MCF 10A (cell line): ENCODE measurements at regions of chr20 and their contacts with region 1.

Region 1: GRCh38 chr20:31723319-31724078 is 831 bp upstream of the BCL2L1 start:
- DNase-seq: peak; percentile 96
- H3K4me3 Mint-ChIP-seq: peak overlapping the region; percentile 91
- H3K27ac Mint-ChIP-seq: peak overlapping the region; percentile 93
- H3K4me1 Mint-ChIP-seq: peaks cover 40% of the 10 kb centered on the region
- H3K27me3 Mint-ChIP-seq: no peaks in the 10 kb centered on the region
- CTCF ChIP-seq: peak; percentile 82

Region 2: DNA sequence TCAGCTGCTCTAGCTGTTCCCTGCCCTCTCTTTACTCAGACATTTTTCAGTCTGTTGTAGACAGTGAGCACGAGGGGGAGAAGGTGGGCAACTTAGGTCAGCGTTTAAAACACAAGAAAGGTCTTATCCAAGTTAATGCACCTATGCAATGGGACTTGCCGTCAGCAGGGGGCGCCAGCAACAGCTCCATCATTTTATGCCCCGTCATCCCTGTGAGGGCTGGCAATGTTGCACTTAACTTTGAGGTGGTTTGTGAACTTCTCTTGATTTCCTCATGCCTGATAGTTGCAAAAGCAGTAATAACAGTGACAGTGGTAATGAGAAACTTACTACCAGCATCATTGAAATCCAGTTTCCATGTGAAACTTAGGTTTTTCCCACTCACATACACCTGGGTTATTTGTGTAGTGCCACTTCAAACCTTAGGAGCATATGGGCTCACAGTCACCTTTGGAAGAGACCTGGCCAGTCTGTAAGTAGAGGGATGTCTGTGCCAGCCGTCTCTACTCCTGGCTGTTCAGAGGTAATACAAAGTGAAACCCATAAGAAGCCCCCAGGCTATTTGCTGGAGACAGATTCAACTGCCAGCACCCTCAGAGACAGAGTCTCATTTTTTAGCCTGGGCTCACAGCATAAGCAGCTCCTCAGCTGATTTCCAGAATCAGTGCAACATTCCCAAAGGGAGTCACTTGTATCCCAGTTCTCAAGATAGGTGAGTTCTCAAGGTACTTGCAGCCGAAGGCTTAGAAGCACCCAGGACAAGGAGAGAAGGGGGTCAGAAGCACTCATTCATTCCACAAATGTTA is 163.2 kb before region 1 on chr20:
- CTCF ChIA-PET with region 1: interaction called, 35 read pairs
- POLR2A ChIA-PET with region 1: interaction called, 8 read pairs
- intact Hi-C with region 1: no loop called
- DNase-seq: peak; percentile 87
- H3K4me3 Mint-ChIP-seq: peak overlapping the region; percentile 45
- H3K27ac Mint-ChIP-seq: peak overlapping the region; percentile 85
- H3K4me1 Mint-ChIP-seq: peaks cover 30% of the 10 kb centered on the region
- H3K27me3 Mint-ChIP-seq: no peaks in the 10 kb centered on the region
- CTCF ChIP-seq: peak; percentile 94

Region 3: GRCh38 chr20:31605031-31605901 is 118.2 kb before region 1 on chr20 and contains the start of gene ID1:
- CTCF ChIA-PET with region 1: interaction called, 50 read pairs
- POLR2A ChIA-PET with region 1: interaction called, 94 read pairs
- intact Hi-C with region 1: no loop called
- DNase-seq: peak; percentile 98
- H3K4me3 Mint-ChIP-seq: peak within 1 kb of the TSS; percentile 88
- H3K27ac Mint-ChIP-seq: peak within 1 kb of the TSS; percentile 81
- H3K4me1 Mint-ChIP-seq: peaks cover 24% of the 10 kb centered on the region
- H3K27me3 Mint-ChIP-seq: no peaks in the 10 kb centered on the region
- CTCF ChIP-seq: no peak
- total RNA-seq, gene ID1: 35.7 and 38.4 TPM in 2 replicates

Region 4: GRCh38 chr20:31652917-31653396 is 70.5 kb before region 1 on chr20:
- CTCF ChIA-PET with region 1: interaction called, 626 read pairs
- POLR2A ChIA-PET with region 1: interaction called, 259 read pairs
- intact Hi-C with region 1: no loop called
- DNase-seq: peak; percentile 83
- H3K4me3 Mint-ChIP-seq: peak overlapping the region; percentile 2
- H3K27ac Mint-ChIP-seq: peak overlapping the region; percentile 57
- H3K4me1 Mint-ChIP-seq: peaks cover 12% of the 10 kb centered on the region
- H3K27me3 Mint-ChIP-seq: no peaks in the 10 kb centered on the region
- CTCF ChIP-seq: no peak

Region 5: DNA sequence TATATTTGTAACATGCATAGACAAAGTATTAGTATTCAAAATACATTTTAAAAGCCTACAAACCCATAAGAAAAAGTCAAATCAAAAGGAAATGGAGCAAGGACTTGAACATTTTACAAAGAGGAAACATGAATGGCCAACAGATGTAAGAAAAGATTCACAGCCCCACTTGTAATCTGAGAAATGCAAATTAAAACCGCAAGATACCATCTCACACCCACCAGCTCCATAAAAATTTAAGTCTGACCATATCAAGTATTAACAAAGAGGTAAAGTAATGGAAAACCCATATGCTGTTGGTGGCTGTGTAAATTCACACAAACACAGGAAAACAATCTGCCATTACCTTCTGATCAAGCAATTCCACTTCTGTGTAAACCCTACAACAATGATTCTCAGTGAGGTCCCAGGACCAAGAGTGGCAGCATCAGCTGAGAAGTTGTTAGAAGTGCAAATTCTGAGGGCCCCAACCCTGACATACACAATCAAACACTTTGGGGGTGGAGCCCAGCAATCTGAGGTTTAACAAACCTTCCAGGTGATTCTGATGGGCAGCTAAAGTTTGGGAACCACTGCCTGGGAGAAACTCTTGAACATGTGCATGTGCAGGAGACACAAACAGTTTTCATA is 31.7 kb before region 1 on chr20:
- CTCF ChIA-PET with region 1: interaction called, 429 read pairs
- POLR2A ChIA-PET with region 1: interaction called, 185 read pairs
- intact Hi-C with region 1: no loop called
- DNase-seq: no peak
- H3K4me3 Mint-ChIP-seq: no peak overlapping the region
- H3K27ac Mint-ChIP-seq: peak overlapping the region; percentile 31
- H3K4me1 Mint-ChIP-seq: peaks cover 34% of the 10 kb centered on the region
- H3K27me3 Mint-ChIP-seq: no peaks in the 10 kb centered on the region
- CTCF ChIP-seq: no peak

Region 6: DNA sequence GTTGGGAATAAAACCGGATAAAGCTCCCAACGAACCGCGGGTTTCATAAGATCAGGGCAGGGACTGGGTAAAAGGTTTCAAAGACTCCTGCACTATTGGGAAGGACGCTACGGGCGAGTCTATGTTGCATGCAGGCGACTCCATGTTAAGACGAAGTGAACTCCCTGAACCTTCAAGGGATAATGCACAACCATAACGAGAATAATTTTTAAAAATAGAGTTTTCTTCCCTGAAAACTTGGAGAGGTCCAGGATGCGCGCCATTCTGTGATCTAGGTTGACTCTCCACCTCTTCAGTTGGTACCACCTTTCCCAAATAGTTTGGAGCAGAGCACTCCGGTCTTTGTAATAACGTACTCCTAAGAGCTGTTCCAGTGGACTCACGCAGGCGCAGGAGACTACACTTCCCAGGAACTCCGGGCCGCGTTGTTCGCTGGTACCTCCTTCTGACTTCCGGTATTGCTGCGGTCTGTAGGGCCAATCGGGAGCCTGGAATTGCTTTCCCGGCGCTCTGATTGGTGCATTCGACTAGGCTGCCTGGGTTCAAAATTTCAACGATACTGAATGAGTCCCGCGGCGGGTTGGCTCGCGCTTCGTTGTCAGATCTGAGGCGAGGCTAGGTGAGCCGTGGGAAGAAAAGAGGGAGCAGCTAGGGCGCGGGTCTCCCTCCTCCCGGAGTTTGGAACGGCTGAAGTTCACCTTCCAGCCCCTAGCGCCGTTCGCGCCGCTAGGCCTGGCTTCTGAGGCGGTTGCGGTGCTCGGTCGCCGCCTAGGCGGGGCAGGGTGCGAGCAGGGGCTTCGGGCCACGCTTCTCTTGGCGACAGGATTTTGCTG is 15.4 kb after region 1 on chr20 and contains the start of gene TPX2:
- CTCF ChIA-PET with region 1: interaction called, 45 read pairs
- POLR2A ChIA-PET with region 1: interaction called, 68 read pairs
- intact Hi-C with region 1: no loop called
- DNase-seq: peak; percentile 98
- H3K4me3 Mint-ChIP-seq: no peak within 1 kb of the TSS
- H3K27ac Mint-ChIP-seq: no peak within 1 kb of the TSS
- H3K4me1 Mint-ChIP-seq: no peaks in the 10 kb centered on the region
- H3K27me3 Mint-ChIP-seq: no peaks in the 10 kb centered on the region
- CTCF ChIP-seq: no peak
- total RNA-seq, gene TPX2: 45.3 and 79.6 TPM in 2 replicates

Region 7: GRCh38 chr20:31849455-31849925 is 126.0 kb after region 1 on chr20:
- CTCF ChIA-PET with region 1: interaction called, 4 read pairs
- POLR2A ChIA-PET with region 1: no interaction called
- intact Hi-C with region 1: loop called (anchors 2 kb)
- DNase-seq: no peak
- H3K4me3 Mint-ChIP-seq: no peak overlapping the region
- H3K27ac Mint-ChIP-seq: no peak overlapping the region
- H3K4me1 Mint-ChIP-seq: no peaks in the 10 kb centered on the region
- H3K27me3 Mint-ChIP-seq: peaks cover 33% of the 10 kb centered on the region
- CTCF ChIP-seq: no peak

Region 8: DNA sequence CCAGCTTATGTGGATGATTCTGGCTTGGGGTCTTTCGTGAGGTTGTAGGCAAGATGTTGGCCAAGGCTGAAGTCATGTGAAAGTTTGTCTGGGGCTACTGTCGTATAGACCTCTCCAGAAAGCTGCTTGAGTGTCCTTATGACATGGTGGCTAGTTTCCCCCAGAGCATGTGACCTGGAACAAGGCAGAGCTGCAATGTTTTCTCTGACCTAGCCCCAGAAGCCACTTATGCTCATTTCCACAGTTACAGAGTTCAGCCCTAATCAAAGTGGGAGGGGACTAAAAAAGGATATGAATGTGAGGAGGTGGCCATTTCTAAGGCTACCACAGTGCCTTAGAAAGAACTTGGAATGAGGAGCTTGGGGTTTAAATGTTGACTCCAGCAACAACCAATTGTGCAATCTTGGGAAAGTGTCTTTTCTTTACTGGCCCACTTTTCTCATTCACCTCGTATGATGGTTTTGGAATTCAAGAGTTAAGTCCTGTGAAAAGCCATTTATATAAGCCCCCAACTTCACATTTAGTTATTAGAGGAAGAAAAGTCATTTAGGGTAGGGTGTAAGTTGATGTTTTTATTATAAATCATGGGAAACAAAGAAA is 628.7 kb after region 1 on chr20:
- CTCF ChIA-PET with region 1: no interaction called
- POLR2A ChIA-PET with region 1: no interaction called
- intact Hi-C with region 1: no loop called
- DNase-seq: no peak
- H3K4me3 Mint-ChIP-seq: no peak overlapping the region
- H3K27ac Mint-ChIP-seq: no peak overlapping the region
- H3K4me1 Mint-ChIP-seq: peaks cover 22% of the 10 kb centered on the region
- H3K27me3 Mint-ChIP-seq: no peaks in the 10 kb centered on the region
- CTCF ChIP-seq: no peak